ENCODE measurements at regions of chr5 and their contacts with region 1.

Region 1: GRCh38 chr5:77645158-77645994 is 6.9 kb upstream of the OTP start:
- DNase-seq: peak; percentile 61
- ATAC-seq: peak; percentile 57
- H3K4me3 Mint-ChIP-seq: peak overlapping the region; percentile 50
- H3K27ac Mint-ChIP-seq: no peak overlapping the region
- H3K4me1 Mint-ChIP-seq: peaks cover 19% of the 10 kb centered on the region
- H3K27me3 Mint-ChIP-seq: peaks cover 74% of the 10 kb centered on the region

Region 2: GRCh38 chr5:77630258-77631089 is 14.9 kb before region 1 on chr5:
- CTCF ChIA-PET with region 1: interaction called, 4 read pairs
- POLR2A ChIA-PET with region 1: no interaction called
- intact Hi-C with region 1: loop called (anchors 1 to 2 kb)
- DNase-seq: peak; percentile 83
- ATAC-seq: peak; percentile 92
- H3K4me3 Mint-ChIP-seq: peak overlapping the region; percentile 74
- H3K27ac Mint-ChIP-seq: no peak overlapping the region
- H3K4me1 Mint-ChIP-seq: peaks cover 26% of the 10 kb centered on the region
- H3K27me3 Mint-ChIP-seq: peaks cover 69% of the 10 kb centered on the region

Region 3: DNA sequence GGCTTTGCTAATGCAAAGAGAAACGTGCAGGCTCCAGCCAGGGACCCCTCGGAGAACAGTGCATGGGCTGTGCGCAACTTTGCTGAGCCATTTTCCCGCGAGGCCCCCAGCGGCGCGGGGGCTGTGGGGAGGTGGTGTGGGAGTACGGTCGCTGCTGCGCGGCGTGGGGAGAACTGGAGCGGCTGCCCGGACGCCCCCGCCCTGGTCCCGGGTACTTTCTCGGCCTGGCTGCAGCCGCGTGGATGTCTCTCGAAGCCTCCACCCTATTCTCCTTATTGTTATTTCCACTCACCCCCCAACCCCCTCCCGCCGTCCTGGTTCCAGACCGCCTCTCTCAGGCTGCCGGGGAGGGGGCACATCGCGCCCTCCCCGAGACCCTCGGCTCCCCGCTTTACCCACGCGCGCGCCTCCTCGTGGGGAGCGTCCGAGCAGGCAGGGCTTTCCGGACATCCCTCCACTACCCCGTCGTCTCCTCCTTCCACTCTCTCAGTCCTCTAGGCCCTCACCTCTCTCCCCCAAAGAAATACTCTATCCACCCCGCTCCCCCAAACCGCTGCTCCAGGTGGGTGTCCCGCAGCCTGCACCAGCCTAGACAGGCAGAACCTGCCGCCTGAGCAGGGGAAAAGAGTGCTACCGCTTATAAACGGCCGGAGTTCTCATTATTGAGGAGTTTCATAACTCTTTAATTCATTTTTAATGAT is 199.4 kb after region 1 on chr5:
- CTCF ChIA-PET with region 1: interaction called, 3 read pairs
- POLR2A ChIA-PET with region 1: no interaction called
- intact Hi-C with region 1: loop called (anchors 5 kb)
- DNase-seq: no peak
- ATAC-seq: no peak
- H3K4me3 Mint-ChIP-seq: peak overlapping the region; percentile 47
- H3K27ac Mint-ChIP-seq: no peak overlapping the region
- H3K4me1 Mint-ChIP-seq: peaks cover 6% of the 10 kb centered on the region
- H3K27me3 Mint-ChIP-seq: peaks cover 28% of the 10 kb centered on the region

Region 4: GRCh38 chr5:77972469-77973252 is 327.3 kb after region 1 on chr5:
- CTCF ChIA-PET with region 1: no interaction called
- POLR2A ChIA-PET with region 1: no interaction called
- intact Hi-C with region 1: loop called (anchors 2 to 5 kb)
- DNase-seq: peak; percentile 55
- ATAC-seq: peak; percentile 65
- H3K4me3 Mint-ChIP-seq: peak overlapping the region; percentile 56
- H3K27ac Mint-ChIP-seq: no peak overlapping the region
- H3K4me1 Mint-ChIP-seq: peaks cover 12% of the 10 kb centered on the region
- H3K27me3 Mint-ChIP-seq: peaks cover 51% of the 10 kb centered on the region

Region 5: DNA sequence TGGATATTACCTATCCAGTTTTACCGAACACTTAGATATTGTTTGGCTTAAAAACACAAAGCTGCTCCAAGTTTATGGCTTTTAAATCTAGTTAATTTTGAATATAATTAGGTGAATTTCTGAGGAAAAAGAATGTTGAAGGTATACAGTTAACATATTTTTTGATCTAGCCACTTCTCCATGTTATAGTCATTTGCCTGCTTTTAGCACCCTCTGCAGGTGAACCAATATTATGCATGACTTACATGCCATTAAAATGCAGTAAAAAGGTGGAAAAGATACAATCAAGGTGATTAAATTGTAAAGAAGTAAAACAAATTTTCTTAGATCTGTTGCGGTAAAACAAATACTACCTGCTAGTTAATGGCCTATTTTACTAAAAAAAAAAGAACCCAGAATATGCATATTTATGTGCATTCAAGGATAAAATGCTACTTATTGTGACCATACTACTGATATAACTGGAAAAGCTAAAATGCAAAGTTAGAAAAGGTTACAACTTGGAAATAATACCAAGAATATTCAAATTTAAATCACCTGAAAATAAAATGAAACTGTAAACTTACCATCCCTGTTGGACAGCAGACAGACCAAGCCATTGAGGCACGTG is 517.0 kb after region 1 on chr5:
- CTCF ChIA-PET with region 1: no interaction called
- POLR2A ChIA-PET with region 1: no interaction called
- intact Hi-C with region 1: loop called in 1 of 2 experiments (anchors 5 kb)
- DNase-seq: peak; percentile 9
- ATAC-seq: no peak
- H3K4me3 Mint-ChIP-seq: no peak overlapping the region
- H3K27ac Mint-ChIP-seq: no peak overlapping the region
- H3K4me1 Mint-ChIP-seq: no peaks in the 10 kb centered on the region
- H3K27me3 Mint-ChIP-seq: no peaks in the 10 kb centered on the region